PC-3 (cell line): ENCODE measurements at regions of chr4 and their contacts with region 1.

Region 1: DNA sequence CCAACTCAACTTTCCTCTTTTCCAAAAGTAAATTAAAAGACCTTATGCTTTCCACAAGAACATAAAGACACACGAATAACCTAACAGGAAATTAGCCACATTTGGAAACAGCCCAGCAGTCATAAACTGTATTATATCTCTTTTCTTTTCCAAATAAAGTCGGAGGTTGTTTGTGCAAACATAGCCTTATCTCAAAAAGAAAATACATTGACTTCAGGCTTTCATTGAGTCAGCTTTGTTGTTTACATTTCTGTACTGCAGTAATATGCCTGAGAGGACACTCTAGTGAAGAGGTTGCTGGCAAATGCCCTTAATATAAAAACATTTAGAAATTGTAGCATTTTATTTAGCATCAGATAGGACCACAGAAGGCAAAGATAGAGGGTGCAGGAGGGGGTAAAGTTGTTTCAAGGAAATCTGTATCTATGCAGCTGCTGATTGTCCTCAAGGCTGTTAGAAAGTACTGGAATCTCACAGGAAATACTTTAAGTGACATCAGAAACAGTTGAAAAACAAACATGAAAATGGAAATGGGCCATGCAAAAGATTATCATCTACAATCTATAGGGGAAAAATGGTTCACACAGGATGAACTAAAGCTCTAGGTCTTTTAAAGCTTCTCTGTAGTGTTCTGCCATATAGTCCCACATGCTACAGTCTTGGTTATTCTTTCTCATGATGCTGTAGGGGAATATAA is 14.5 kb downstream of the LNX1 start:
- DNase-seq: peak; percentile 91
- ATAC-seq: peak; percentile 85
- H3K4me3 ChIP-seq: peak overlapping the region; percentile 2; the same call in 1 of the 2 replicates
- H3K27ac ChIP-seq: peak overlapping the region; percentile 81
- H3K4me1 ChIP-seq: peaks cover 42% of the 10 kb centered on the region
- H3K27me3 ChIP-seq: no peaks in the 10 kb centered on the region
- CTCF ChIP-seq: no peak

Region 2: GRCh38 chr4:53450773-53451172 is 126.1 kb before region 1 on chr4:
- CTCF ChIA-PET with region 1: interaction called, 3 read pairs
- POLR2A ChIA-PET with region 1: interaction called, 14 read pairs
- intact Hi-C with region 1: no loop called
- DNase-seq: no peak
- ATAC-seq: no peak
- H3K4me3 ChIP-seq: no peak overlapping the region
- H3K27ac ChIP-seq: no peak overlapping the region
- H3K4me1 ChIP-seq: peaks cover 13% of the 10 kb centered on the region
- H3K27me3 ChIP-seq: no peaks in the 10 kb centered on the region
- CTCF ChIP-seq: no peak

Region 3: GRCh38 chr4:53541577-53542206 is 35.1 kb before region 1 on chr4:
- CTCF ChIA-PET with region 1: no interaction called
- POLR2A ChIA-PET with region 1: interaction called, 3 read pairs
- intact Hi-C with region 1: loop called (anchors 2 kb)
- DNase-seq: peak; percentile 83
- ATAC-seq: peak; percentile 78
- H3K4me3 ChIP-seq: no peak overlapping the region; the same call in 1 of the 2 replicates
- H3K27ac ChIP-seq: peak overlapping the region; percentile 71
- H3K4me1 ChIP-seq: peaks cover 35% of the 10 kb centered on the region
- H3K27me3 ChIP-seq: no peaks in the 10 kb centered on the region
- CTCF ChIP-seq: no peak

Region 4: GRCh38 chr4:53558065-53558801 is 18.6 kb before region 1 on chr4:
- CTCF ChIA-PET with region 1: no interaction called
- POLR2A ChIA-PET with region 1: no interaction called
- intact Hi-C with region 1: loop called (anchors 2 kb)
- DNase-seq: peak; percentile 90
- ATAC-seq: peak; percentile 96
- H3K4me3 ChIP-seq: peak overlapping the region; percentile 11; the same call in 1 of the 2 replicates
- H3K27ac ChIP-seq: peak overlapping the region; percentile 27; the same call in 1 of the 2 replicates
- H3K4me1 ChIP-seq: peaks cover 22% of the 10 kb centered on the region
- H3K27me3 ChIP-seq: no peaks in the 10 kb centered on the region
- CTCF ChIP-seq: no peak